GM12878 (cell line): ENCODE measurements at regions of chr5 and their contacts with region 1.

Region 1: DNA sequence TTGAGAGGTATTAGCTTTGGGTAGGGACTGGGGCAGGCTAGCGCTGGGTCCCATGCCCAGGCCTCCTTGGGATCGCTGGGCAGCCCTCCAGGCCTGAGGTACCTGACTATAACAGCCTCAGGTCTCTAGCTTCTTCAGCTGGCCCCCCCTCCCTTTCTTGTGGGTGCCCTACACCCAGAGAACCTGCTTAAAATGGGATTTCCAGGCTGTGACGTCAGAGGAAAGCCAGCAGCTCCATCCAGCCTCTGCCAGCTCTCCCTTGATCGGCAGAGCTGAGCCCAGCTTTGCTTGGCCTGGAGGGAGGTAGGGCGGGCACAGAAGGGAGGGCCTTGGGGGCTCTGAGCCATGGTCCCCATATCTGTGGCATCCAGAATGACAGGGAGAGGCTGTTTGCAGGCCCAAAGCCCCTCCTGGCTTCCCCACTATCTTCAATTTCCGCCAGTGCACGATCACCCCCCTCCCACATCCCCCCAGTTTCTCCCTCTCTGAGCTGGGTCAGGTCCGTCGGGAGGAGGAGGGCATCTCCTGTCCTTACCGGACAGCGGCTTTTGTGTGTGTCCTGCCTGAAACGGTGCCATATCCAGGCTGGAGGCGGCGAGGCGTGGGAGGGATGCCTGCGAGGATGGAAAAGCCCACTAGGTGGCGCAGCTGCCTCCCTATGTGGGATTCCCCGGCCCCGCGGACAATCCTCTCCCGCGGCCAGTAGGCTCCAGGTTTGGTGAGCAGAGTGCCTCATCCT is 10.8 kb downstream of the REEP2 start:
- DNase-seq: no peak
- ATAC-seq: peak; percentile 97
- H3K4me3 ChIP-seq: no peak overlapping the region
- H3K27ac ChIP-seq: no peak overlapping the region
- H3K4me1 ChIP-seq: peaks cover 4% of the 10 kb centered on the region; the same call in 1 of the 2 replicates
- H3K27me3 ChIP-seq: no peaks in the 10 kb centered on the region
- CTCF ChIP-seq: peak; percentile 91 to 96 (median 93)
- EP300 ChIP-seq: no peak
- POLR2A ChIP-seq: no peak
- RAD21 ChIP-seq: peak; percentile 63

Region 2: DNA sequence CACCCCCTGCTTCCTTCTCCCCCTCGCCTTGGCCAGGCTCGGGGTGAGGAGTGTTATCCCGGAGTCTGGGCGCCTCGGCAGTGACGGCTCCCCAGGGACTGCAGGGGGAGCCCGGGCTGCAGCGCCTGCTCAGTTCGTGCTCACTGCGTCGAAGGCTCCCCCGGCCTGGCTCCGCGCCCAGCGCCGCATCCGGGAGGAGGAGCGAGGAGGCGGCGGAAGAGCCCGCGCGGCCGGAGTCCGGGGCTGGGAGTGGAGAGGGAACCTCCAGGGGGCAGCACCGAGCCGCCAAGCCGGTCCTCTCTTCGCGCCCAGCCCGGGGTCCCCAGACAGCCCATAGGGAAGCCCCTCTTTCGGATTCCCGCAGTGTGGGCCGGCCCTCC is 14.3 kb after region 1 on chr5:
- CTCF ChIA-PET with region 1: interaction called, 71 read pairs
- POLR2A ChIA-PET with region 1: interaction called, 6 read pairs
- RAD21 ChIA-PET with region 1: interaction called, 7 read pairs
- SMC1A ChIA-PET with region 1: interaction called, 7 read pairs
- in situ Hi-C with region 1: no loop called
- intact Hi-C with region 1: no loop called
- DNase-seq: peak; percentile 76
- ATAC-seq: peak; percentile 71
- H3K4me3 ChIP-seq: peak overlapping the region; percentile 80
- H3K27ac ChIP-seq: peak overlapping the region; percentile 98
- H3K4me1 ChIP-seq: peaks cover 19% of the 10 kb centered on the region
- H3K27me3 ChIP-seq: peaks cover 0 to 6% of the 10 kb centered on the region in 2 experiments; a peak in 1 of 4 replicates
- CTCF ChIP-seq: peak; percentile 79 to 81 (median 80)
- EP300 ChIP-seq: no peak
- POLR2A ChIP-seq: peak; percentile 80
- RAD21 ChIP-seq: peak; percentile 29; the same call in 1 of the 2 replicates

Region 3: GRCh38 chr5:138503487-138504270 is 54.0 kb after region 1 on chr5:
- CTCF ChIA-PET with region 1: interaction called, 123 read pairs
- POLR2A ChIA-PET with region 1: interaction called, 6 read pairs
- RAD21 ChIA-PET with region 1: interaction called, 56 read pairs
- SMC1A ChIA-PET with region 1: interaction called, 58 read pairs
- in situ Hi-C with region 1: no loop called
- intact Hi-C with region 1: loop called (anchors 1 kb)
- DNase-seq: peak; percentile 17
- ATAC-seq: peak; percentile 82
- H3K4me3 ChIP-seq: no peak overlapping the region
- H3K27ac ChIP-seq: no peak overlapping the region
- H3K4me1 ChIP-seq: no peaks in the 10 kb centered on the region
- H3K27me3 ChIP-seq: no peaks in the 10 kb centered on the region
- CTCF ChIP-seq: peak; percentile 79 to 84 (median 82)
- EP300 ChIP-seq: no peak
- POLR2A ChIP-seq: peak; percentile 38; the same call in 1 of the 2 replicates
- RAD21 ChIP-seq: peak; percentile 82

Region 4: DNA sequence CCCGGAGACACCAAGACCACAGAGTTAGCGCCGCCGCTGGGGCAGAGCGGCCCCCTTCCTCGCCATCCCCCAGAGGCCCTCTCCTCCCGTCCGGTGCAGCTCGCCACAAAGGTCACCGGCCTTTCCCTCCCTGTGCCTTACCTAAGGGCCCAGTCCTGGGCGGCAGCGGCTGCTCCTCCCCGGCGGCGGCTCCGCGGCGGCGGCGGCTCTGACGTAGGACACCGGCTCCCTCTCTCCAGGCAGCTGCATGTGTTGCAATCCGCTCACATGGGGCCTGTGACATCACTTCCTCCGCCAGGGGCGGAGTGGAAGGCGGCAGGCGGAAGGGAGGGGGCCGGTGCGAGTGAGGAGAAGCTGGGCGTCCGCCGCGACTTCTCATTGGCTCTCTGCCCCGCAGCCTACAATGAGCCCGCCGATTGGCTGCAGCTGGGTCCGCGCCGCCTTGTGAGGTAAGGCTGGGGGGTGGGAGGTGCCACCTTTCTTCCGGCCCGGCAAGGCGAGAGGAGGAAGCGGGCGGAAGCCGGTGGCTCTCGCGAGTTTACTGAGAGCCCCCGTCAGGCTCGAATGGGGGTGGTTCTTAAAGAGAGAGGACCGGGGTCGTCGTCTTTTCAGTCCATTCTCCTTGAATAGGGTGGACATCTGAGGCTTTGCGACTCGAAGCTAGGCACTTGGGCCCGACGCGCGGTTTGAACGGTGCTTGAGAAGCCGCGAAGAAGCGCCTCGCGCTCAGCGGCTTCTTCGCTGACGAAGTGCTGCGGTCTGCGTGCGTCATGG is 93.5 kb after region 1 on chr5 and contains the start of gene ETF1:
- CTCF ChIA-PET with region 1: interaction called, 15 read pairs
- POLR2A ChIA-PET with region 1: no interaction called
- RAD21 ChIA-PET with region 1: interaction called, 8 read pairs
- SMC1A ChIA-PET with region 1: interaction called, 3 read pairs
- in situ Hi-C with region 1: no loop called
- intact Hi-C with region 1: no loop called
- DNase-seq: peak; percentile 97
- ATAC-seq: peak; percentile 92
- H3K4me3 ChIP-seq: peak within 1 kb of the TSS; percentile 99
- H3K27ac ChIP-seq: peak within 1 kb of the TSS; percentile 100
- H3K4me1 ChIP-seq: peaks cover 17% of the 10 kb centered on the region
- H3K27me3 ChIP-seq: no peaks in the 10 kb centered on the region
- CTCF ChIP-seq: no peak
- EP300 ChIP-seq: 0 out of 4 replicates have a peak, but pooled peaks have one; percentile 6 to 7
- POLR2A ChIP-seq: peak; percentile 86
- RAD21 ChIP-seq: no peak
- polyA plus RNA-seq, gene ETF1: 29.8 to 44.9 TPM

Region 5: DNA sequence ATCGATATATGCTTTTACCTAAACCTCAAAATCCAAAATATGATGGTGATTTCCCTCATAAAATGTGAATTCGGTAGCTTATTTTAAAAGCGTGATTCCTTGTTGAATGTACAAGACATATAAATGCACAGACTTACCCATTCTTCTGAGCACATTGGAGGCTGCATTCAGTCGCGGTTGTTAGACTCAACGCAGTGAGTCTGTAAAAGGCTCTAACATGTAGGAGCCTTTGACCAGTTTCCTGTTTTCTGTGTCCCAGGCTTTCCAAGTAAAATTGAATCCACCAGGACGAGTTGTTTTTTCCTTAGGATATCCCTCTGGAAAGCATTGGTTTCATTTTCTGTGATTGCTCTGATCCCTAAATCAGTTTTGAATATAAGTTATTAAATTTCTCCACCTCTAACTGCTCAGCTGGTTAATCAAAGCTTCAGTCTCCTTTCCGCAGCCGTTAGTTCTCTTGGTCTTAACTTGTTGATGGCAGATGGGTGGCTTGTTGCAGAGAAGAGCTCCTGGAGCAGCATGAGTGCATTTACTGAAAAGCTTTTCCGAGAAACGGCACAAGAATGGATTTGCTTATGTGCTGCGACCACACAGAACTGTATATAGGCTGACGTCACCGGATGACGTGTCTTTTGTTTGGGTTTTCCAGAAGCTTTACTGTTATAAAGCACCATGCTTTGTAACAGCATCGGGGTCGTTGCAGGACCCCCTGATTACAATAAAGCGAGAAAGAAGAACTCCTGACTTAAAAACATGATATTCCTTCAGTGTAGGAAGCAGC is 425.3 kb after region 1 on chr5 and contains the start of gene LRRTM2:
- CTCF ChIA-PET with region 1: no interaction called
- POLR2A ChIA-PET with region 1: no interaction called
- RAD21 ChIA-PET with region 1: no interaction called
- SMC1A ChIA-PET with region 1: no interaction called
- in situ Hi-C with region 1: no loop called
- intact Hi-C with region 1: no loop called
- DNase-seq: no peak
- ATAC-seq: no peak
- H3K4me3 ChIP-seq: no peak within 1 kb of the TSS
- H3K27ac ChIP-seq: no peak within 1 kb of the TSS
- H3K4me1 ChIP-seq: no peaks in the 10 kb centered on the region
- H3K27me3 ChIP-seq: no peaks in the 10 kb centered on the region
- CTCF ChIP-seq: no peak
- EP300 ChIP-seq: no peak
- POLR2A ChIP-seq: no peak
- RAD21 ChIP-seq: no peak
- polyA plus RNA-seq, gene LRRTM2: not detected